Activated CD4-positive, alpha-beta T cell treated with anti-CD3 and anti-CD28 coated beads, Interleukin-2, amount 10 ng/mL, durations not matched to agents 24 days and 14 days (primary cell): ENCODE measurements at regions of chr10 and their contacts with region 1.

Region 1: DNA sequence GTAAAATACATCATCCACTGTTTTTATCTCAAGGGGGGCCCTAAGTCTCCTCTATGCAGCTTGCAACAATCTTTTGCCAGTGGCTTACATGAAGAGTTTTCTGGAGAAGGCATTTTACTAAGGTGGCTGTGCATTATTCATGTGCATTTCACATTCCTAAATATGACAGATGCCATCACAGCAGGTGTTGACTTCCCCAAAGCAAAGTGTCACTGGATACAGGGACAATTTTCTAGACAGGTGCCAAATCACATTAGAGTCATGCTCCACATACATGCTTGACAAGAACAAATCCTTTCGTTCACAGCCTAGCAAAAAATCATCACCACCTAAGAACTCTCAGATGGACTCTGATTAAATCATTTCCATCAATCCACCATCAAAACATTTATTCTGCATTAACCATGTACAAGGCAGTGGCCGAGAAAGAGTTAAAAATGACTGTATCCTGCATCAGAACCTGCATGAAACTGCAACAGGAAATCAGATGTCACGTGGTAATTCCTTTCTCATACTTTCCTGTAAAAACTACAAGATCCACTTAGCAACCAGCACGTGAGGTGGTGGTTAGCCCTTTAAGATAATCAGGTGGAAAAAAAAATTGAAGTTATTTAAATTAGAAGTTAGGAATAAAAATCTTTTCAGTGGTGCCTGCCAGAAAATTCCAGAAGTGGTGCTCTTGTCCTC is 88.2 kb upstream of the AFAP1L2 start:
- DNase-seq: peak; percentile 80
- H3K4me3 Mint-ChIP-seq: peak overlapping the region; percentile 40
- H3K27ac Mint-ChIP-seq: peak overlapping the region; percentile 49
- H3K4me1 Mint-ChIP-seq: peaks cover 45% of the 10 kb centered on the region
- H3K27me3 Mint-ChIP-seq: no peaks in the 10 kb centered on the region

Region 2: DNA sequence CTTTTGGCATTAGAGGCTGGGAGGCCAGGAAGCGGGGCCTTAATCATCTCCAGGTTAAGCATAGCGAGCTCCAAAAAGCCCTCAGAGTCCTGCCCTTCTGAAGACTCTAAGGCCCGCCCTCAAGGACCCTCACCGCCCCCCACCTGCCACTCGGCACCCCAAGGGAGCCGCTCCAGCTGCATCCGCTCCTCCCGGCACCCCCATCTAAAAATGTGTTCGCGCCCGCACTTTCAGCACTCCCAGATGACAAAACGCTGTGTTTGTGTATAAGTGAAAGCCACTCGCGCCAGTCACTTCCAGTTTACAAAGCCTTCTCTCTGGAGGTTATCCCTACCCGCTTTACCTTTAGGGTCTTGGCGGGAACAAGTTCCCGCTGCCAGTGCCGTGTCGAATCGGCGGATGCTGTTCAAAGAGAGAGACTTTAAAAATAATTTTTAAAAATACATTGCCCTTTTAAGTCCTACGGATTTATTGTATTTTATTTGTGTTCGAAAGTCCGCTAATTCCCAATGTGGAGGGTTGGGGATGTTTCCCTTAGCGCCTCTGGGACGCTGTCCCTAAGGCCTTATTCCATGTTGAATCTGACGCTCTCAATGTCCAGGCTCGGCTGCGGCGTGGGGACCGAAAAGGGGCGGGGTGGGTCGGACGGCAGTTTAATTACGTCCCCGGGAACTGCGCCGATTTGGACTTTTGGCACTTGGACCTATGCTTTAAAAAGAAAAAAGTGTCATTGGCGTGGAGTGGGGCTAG is 638.3 kb before region 1 on chr10 and contains the starts of genes DCLRE1A and NHLRC2:
- intact Hi-C with region 1: no loop called
- DNase-seq: peak; percentile 87
- H3K4me3 Mint-ChIP-seq: peak within 1 kb of the TSS; percentile 98
- H3K27ac Mint-ChIP-seq: peak within 1 kb of the TSS; percentile 95
- H3K4me1 Mint-ChIP-seq: peaks cover 33% of the 10 kb centered on the region
- H3K27me3 Mint-ChIP-seq: no peaks in the 10 kb centered on the region
- total RNA-seq, gene DCLRE1A: 14.4 and 14.6 TPM in 2 replicates
- total RNA-seq, gene NHLRC2: 23.6 and 27.2 TPM in 2 replicates

Region 3: GRCh38 chr10:114437456-114438292 is 54.8 kb before region 1 on chr10:
- intact Hi-C with region 1: no loop called
- DNase-seq: no peak
- H3K4me3 Mint-ChIP-seq: no peak overlapping the region
- H3K27ac Mint-ChIP-seq: no peak overlapping the region
- H3K4me1 Mint-ChIP-seq: peaks cover 2% of the 10 kb centered on the region
- H3K27me3 Mint-ChIP-seq: no peaks in the 10 kb centered on the region

Region 4: DNA sequence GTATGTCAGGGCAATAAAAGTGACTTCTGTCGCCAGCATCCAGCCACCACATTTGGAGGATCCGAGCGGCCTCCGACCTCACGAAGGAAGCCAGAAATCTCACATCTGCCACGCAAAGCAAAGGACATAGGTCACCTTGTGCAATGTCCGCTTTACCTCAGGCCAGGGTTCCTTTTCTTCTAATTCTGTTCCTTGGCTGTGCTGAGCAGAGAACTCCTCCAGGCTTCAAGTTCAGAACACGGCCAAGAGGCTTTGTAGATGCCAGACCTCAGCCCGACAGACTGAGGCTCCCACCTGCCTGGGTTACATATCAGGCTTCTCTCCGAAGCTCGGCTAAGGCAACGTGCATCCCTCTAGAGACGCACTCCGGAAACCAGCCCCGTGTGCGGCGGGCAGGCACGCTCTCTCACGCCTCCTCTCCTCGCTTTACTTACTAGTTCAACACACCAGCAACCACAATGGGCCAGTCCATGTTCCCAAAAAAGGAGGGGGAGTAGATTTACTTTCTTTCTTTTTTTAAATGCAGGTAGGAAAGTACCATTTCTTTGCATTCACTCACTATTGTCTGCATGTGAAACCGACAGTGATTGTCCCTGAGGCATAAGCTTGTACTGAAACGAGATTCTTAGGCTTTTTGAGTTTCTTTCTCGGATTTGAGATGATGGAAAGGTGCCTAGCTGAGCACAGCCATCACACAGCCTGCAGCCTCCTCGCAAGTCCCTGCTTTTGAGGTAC is 34.2 kb after region 1 on chr10:
- intact Hi-C with region 1: loop called (anchors 1 kb)
- DNase-seq: peak; percentile 97
- H3K4me3 Mint-ChIP-seq: peak overlapping the region; percentile 78
- H3K27ac Mint-ChIP-seq: peak overlapping the region; percentile 97
- H3K4me1 Mint-ChIP-seq: peaks cover 53% of the 10 kb centered on the region
- H3K27me3 Mint-ChIP-seq: no peaks in the 10 kb centered on the region

Region 5: GRCh38 chr10:114810926-114811325 is 318.4 kb after region 1 on chr10:
- intact Hi-C with region 1: loop called (anchors 1 kb)
- DNase-seq: peak; percentile 71
- H3K4me3 Mint-ChIP-seq: peak overlapping the region; percentile 48
- H3K27ac Mint-ChIP-seq: peak overlapping the region; percentile 78
- H3K4me1 Mint-ChIP-seq: peaks cover 23% of the 10 kb centered on the region
- H3K27me3 Mint-ChIP-seq: peaks cover 2% of the 10 kb centered on the region